A673 (cell line): ENCODE measurements at regions of chr20 and their contacts with region 1.

Region 1: DNA sequence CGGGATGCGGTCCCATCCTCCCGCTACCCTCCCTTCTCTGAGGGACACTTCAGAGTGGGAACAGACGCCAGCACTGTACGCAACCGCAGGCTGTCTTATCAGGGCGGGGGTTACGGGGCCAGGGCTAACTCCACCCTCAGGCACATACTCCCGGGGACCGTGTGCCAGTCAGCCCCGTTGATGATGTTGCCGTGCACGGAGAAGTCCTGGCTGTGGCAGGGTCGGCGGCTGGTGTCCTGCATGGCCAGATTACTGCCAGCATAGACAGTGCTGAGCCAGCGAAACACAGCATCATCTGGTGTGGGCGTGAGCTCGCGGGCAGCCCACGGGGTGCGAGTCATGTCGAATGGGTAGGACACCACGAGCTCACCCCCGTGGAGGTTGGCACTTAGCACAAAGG is 5.0 kb downstream of the CPXM1 start:
- DNase-seq: no peak
- H3K4me3 ChIP-seq: no peak overlapping the region
- H3K27ac ChIP-seq: no peak overlapping the region
- H3K4me1 ChIP-seq: peaks cover 5% of the 10 kb centered on the region
- H3K27me3 ChIP-seq: peaks cover 42% of the 10 kb centered on the region
- CTCF ChIP-seq: no peak

Region 2: GRCh38 chr20:2713285-2713684 is 82.2 kb before region 1 on chr20:
- CTCF ChIA-PET with region 1: interaction called, 11 read pairs
- POLR2A ChIA-PET with region 1: no interaction called
- intact Hi-C with region 1: no loop called
- DNase-seq: peak; percentile 38
- H3K4me3 ChIP-seq: no peak overlapping the region
- H3K27ac ChIP-seq: no peak overlapping the region
- H3K4me1 ChIP-seq: no peaks in the 10 kb centered on the region
- H3K27me3 ChIP-seq: peaks cover 38% of the 10 kb centered on the region
- CTCF ChIP-seq: peak; percentile 59